ENCODE measurements at regions of chr11 and their contacts with region 1.

Region 1: GRCh38 chr11:93895106-93895862 is 44.9 kb upstream of the VSTM5 start:
- DNase-seq: peak; percentile 53
- H3K4me3 ChIP-seq: no peak overlapping the region
- H3K27me3 ChIP-seq: peaks cover 4% of the 10 kb centered on the region
- CTCF ChIP-seq: peak; percentile 74

Region 2: DNA sequence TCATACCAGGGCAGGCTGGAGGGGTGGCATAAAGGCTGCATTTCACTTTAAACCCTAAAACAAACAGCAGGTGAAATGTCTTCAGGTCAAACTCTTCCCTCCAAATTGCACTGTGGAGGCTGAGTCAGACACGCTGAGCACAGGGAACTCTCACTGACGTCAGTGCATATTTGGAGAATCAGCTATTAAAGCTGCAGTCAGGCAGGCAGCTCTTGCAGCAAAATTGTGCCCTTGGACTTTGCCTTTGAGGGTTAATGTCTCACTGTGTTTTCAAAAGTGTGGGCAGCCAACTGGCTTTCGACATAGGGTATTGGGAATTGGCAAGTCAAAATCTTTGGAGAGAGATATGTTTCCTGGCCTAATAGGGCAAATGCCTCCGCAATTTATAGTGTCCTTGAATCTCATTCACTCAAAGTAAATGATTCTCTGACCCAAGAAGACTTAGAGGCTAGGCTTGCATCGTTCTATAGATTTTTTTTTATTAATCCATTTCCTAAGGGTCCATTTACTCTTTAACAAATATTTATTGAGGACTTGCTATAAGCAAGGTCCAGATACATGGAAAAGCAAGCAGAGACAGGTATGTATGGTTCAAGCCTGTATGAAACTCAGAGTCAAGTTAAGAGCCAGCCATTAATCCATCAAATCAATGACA is 324.4 kb before region 1 on chr11:
- CTCF ChIA-PET with region 1: no interaction called
- POLR2A ChIA-PET with region 1: no interaction called
- DNase-seq: peak; percentile 20
- H3K4me3 ChIP-seq: no peak overlapping the region
- H3K27me3 ChIP-seq: peaks cover 1% of the 10 kb centered on the region; the same call in 1 of the 2 replicates
- CTCF ChIP-seq: no peak

Region 3: GRCh38 chr11:93756748-93757147 is 138.5 kb before region 1 on chr11:
- CTCF ChIA-PET with region 1: no interaction called
- POLR2A ChIA-PET with region 1: no interaction called
- DNase-seq: no peak
- H3K4me3 ChIP-seq: no peak overlapping the region
- H3K27me3 ChIP-seq: no peaks in the 10 kb centered on the region
- CTCF ChIP-seq: no peak

Region 4: GRCh38 chr11:93908689-93909088 is 13.4 kb after region 1 on chr11:
- CTCF ChIA-PET with region 1: interaction called, 18 read pairs
- POLR2A ChIA-PET with region 1: no interaction called
- DNase-seq: peak; percentile 45
- H3K4me3 ChIP-seq: no peak overlapping the region
- H3K27me3 ChIP-seq: no peaks in the 10 kb centered on the region
- CTCF ChIP-seq: no peak

Region 5: GRCh38 chr11:93939084-93939760 is 43.9 kb after region 1 on chr11:
- CTCF ChIA-PET with region 1: no interaction called
- POLR2A ChIA-PET with region 1: no interaction called
- DNase-seq: no peak
- H3K4me3 ChIP-seq: no peak overlapping the region
- H3K27me3 ChIP-seq: peaks cover 3% of the 10 kb centered on the region; the same call in 1 of the 2 replicates
- CTCF ChIP-seq: no peak

Region 6: GRCh38 chr11:94128746-94129511 is 233.6 kb after region 1 on chr11 and contains the start of gene PANX1:
- CTCF ChIA-PET with region 1: interaction called, 12 read pairs
- POLR2A ChIA-PET with region 1: no interaction called
- DNase-seq: peak; percentile 26
- H3K4me3 ChIP-seq: peak within 1 kb of the TSS; percentile 76
- H3K27me3 ChIP-seq: no peaks in the 10 kb centered on the region
- CTCF ChIP-seq: no peak
- polyA plus RNA-seq, gene PANX1: 30.1 and 32.3 TPM in 2 replicates

Region 7: DNA sequence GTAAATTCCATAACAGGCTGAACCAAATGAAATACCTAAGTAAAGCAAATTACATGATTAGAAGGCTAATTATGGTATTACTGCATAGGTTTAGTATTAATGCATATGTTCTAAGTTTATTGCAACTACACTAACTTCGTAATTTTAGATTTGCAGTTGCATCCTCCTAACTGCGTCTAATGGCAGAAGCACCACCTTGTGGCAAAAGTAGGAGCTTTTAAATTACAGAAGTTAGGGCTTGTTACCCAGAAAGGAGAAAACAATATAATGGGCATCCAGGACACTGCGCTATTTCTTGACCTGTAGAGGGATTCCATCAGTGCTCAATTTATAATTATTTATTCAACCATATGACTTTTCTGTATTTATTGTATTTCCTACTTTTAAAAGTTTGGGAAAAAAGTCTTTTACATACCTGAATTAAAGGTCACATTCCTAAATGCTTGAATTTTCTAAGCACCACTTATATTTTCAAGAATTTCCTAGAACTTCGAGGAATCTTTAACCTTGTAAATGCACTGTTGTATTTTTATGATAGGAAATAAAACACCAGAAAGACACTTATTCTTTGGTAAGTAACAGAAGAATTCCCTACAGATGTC is 522.2 kb after region 1 on chr11:
- CTCF ChIA-PET with region 1: interaction called, 49 read pairs
- POLR2A ChIA-PET with region 1: no interaction called
- DNase-seq: no peak
- H3K4me3 ChIP-seq: no peak overlapping the region
- H3K27me3 ChIP-seq: no peaks in the 10 kb centered on the region
- CTCF ChIP-seq: peak; percentile 65

Region 8: DNA sequence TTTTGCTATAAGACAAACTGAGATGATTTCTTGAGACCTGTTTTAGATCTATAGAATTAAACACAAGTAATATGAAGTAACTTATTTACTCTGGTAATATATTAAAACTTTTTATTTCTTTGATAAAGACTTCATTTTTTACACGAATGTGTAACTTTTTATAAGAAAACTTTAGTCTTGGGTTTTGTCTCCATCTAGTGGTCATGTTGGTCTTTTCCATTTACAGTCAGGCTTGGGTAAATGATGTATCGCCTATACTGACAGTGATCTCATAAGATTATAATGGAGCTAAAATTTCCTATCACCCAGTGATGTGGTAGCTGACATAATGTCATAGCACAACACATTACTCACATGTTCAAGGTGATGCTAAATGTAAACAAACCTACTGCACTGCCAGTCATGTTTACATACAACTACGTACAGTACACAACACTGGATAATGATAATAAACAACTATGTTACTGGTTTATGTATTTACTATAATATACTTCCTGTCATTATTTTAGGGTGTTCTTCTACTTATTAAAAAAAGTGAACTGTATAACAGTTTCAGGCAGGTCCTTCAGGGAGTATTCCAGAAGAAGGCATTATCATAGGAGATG is 609.5 kb after region 1 on chr11:
- CTCF ChIA-PET with region 1: interaction called, 34 read pairs
- POLR2A ChIA-PET with region 1: no interaction called
- DNase-seq: no peak
- H3K4me3 ChIP-seq: no peak overlapping the region
- H3K27me3 ChIP-seq: no peaks in the 10 kb centered on the region
- CTCF ChIP-seq: peak; percentile 58